ENCODE measurements at regions of chr14 and their contacts with region 1.

Region 1: GRCh38 chr14:87944987-87945604 is 47.9 kb downstream of the GALC start:
- DNase-seq: peak in 1 of 2 experiments; percentile 62
- ATAC-seq: peak in 1 of 2 experiments; percentile 45; a peak in 1 of 6 replicates
- H3K4me3 ChIP-seq: no peak overlapping the region
- H3K27ac ChIP-seq: no peak overlapping the region
- H3K4me1 ChIP-seq: no peaks in the 10 kb centered on the region
- CTCF ChIP-seq: peak; percentile 73
- EP300 ChIP-seq: no peak
- POLR2A ChIP-seq: no peak
- RAD21 ChIP-seq: peak; percentile 68 to 76

Region 2: GRCh38 chr14:87679866-87680265 is 265.2 kb before region 1 on chr14:
- CTCF ChIA-PET with region 1: no interaction called
- POLR2A ChIA-PET with region 1: no interaction called
- DNase-seq: no peak
- ATAC-seq: no peak
- H3K4me3 ChIP-seq: no peak overlapping the region
- H3K27ac ChIP-seq: no peak overlapping the region
- H3K4me1 ChIP-seq: no peaks in the 10 kb centered on the region
- CTCF ChIP-seq: no peak
- EP300 ChIP-seq: no peak
- POLR2A ChIP-seq: no peak
- RAD21 ChIP-seq: no peak

Region 3: GRCh38 chr14:87888229-87888999 is 56.7 kb before region 1 on chr14:
- CTCF ChIA-PET with region 1: no interaction called
- POLR2A ChIA-PET with region 1: no interaction called
- DNase-seq: peak; percentile 14 to 31
- ATAC-seq: peak in 1 of 2 experiments; percentile 84; a peak in 3 of 6 replicates
- H3K4me3 ChIP-seq: no peak overlapping the region
- H3K27ac ChIP-seq: no peak overlapping the region
- H3K4me1 ChIP-seq: no peaks in the 10 kb centered on the region
- CTCF ChIP-seq: peak; percentile 19; the same call in 1 of the 3 replicates
- EP300 ChIP-seq: no peak
- POLR2A ChIP-seq: no peak
- RAD21 ChIP-seq: no peak; a peak in 1 of 5 replicates

Region 4: DNA sequence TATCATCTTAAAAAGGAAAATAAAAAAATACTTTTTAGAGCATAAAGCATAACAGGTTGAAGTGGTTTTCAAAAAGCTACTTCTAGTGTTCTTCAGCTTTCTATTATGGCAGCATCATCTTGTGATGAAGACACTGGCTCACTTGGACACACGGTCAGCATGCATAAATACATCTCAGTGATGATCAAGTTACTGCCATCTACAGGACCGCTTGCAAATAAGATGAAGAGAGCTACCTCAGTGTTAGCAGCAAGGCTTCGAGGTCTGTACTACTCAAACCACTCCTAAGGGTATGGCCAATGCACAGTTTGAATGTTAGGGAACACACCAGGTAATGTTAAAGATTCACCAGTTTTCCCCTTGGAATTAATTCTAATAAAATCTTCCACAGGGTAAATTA is 10.9 kb before region 1 on chr14:
- CTCF ChIA-PET with region 1: interaction called, 50 read pairs
- POLR2A ChIA-PET with region 1: no interaction called
- DNase-seq: peak in 1 of 2 experiments; percentile 30
- ATAC-seq: peak; percentile 64 to 77; a peak in 5 of 6 replicates
- H3K4me3 ChIP-seq: no peak overlapping the region
- H3K27ac ChIP-seq: no peak overlapping the region
- H3K4me1 ChIP-seq: no peaks in the 10 kb centered on the region
- CTCF ChIP-seq: no peak; the same call in 2 of the 3 replicates
- EP300 ChIP-seq: no peak
- POLR2A ChIP-seq: no peak
- RAD21 ChIP-seq: no peak

Region 5: GRCh38 chr14:87966816-87967215 is 21.7 kb after region 1 on chr14:
- CTCF ChIA-PET with region 1: interaction called, 13 read pairs
- POLR2A ChIA-PET with region 1: no interaction called
- DNase-seq: no peak
- ATAC-seq: no peak
- H3K4me3 ChIP-seq: no peak overlapping the region
- H3K27ac ChIP-seq: no peak overlapping the region
- H3K4me1 ChIP-seq: no peaks in the 10 kb centered on the region
- CTCF ChIP-seq: no peak
- EP300 ChIP-seq: no peak
- POLR2A ChIP-seq: no peak
- RAD21 ChIP-seq: no peak

Region 6: DNA sequence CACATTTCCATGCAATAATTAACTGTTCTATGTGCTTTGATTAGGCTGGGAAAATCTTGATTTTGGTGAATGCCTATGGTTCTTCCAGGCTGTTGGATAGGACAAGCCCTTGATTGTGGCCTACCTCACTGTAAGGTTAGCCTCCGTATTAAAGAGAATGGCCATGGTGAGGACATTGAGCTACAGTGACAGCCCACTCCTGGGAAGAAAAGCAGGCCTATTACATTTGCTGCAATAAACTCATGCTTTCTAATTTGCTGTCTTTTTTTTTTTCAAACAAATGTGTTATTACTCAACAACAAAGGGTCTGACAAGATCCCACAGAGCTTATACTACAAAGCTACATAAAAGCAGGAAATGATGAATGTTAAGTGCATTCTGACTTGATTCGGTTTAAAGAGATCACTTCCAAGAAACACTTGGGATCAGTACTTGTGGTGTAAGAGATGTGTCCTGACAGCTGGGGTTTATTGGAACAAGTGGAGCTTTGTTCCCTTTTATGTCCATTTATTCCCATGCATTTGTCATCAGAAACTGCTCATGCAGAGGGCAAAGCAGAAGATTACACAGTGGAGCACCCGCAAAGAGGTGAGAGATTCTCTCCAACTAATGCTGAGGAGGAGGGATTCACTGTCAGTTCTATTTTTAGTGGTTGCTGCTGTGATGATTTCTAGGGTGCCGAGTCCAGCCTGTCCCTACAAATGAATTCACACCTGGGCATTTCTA is 407.0 kb after region 1 on chr14:
- CTCF ChIA-PET with region 1: no interaction called
- POLR2A ChIA-PET with region 1: no interaction called
- DNase-seq: no peak
- ATAC-seq: no peak
- H3K4me3 ChIP-seq: no peak overlapping the region
- H3K27ac ChIP-seq: no peak overlapping the region
- H3K4me1 ChIP-seq: no peaks in the 10 kb centered on the region
- CTCF ChIP-seq: no peak
- EP300 ChIP-seq: no peak
- POLR2A ChIP-seq: no peak
- RAD21 ChIP-seq: no peak